ENCODE measurements at regions of chrX and their contacts with region 1.

Region 1: DNA sequence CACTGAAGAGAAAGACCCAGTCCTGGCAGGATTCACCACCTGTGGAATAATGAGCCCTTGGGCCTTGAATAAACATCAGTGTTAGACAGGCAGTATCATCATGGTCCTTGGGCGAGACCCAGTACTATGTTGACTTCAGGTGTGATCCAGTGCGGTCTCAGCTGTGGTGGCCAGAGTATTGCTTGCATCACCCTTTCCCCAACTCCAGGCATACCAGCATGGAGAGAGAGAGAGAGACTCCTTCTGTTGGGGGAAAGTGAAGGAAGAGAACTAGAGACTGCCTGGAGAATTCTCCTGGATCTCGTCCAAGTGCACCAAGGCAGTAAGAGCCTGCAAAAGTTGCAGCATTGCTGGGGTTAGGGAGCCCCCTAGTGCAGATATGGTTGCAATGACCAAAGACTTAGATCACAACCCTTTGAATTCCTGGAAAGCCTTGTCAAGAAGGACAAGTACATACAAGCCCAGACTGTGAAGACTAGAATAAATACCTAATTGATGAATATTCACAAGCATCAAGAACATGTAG is 61.1 kb upstream of the VAMP7 start:
- DNase-seq: peak; percentile 22 to 61
- ATAC-seq: peak; percentile 83 to 90 (median 88)
- H3K4me3 ChIP-seq: no peak overlapping the region
- H3K27ac ChIP-seq: no peak overlapping the region
- H3K4me1 ChIP-seq: no peaks in the 10 kb centered on the region
- H3K27me3 ChIP-seq: no peaks in the 10 kb centered on the region
- CTCF ChIP-seq: peak; percentile 62

Region 2: DNA sequence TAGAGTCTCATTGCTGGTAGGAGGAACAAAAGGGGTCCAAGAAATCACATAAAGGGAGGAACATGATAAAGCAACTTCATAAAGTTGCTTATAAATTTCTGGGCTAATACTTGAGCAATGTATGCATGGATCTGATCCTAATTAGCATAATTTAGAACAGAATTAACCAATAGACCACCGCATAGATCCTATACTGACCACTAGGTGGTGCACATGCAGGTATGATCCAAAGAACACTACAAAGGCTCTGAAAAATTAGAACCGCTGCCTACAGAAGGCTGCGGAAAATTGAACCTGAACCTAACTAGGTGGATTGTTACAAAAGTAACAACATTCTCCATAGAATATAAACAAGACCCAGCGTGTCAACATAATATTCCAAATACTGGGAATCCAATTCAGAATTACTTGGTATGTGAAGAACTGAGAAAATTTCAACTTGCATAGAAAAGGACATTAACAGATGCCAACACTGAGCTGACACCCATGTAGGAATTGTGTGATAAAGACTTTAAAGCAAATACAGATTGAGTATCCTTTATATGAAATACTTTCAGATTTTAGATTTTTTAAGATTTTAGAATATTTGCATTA is 725.5 kb before region 1 on chrX:
- intact Hi-C with region 1: loop called in 1 of 2 experiments (anchors 5 kb)
- DNase-seq: no peak
- ATAC-seq: no peak
- H3K4me3 ChIP-seq: no peak overlapping the region
- H3K27ac ChIP-seq: no peak overlapping the region
- H3K4me1 ChIP-seq: no peaks in the 10 kb centered on the region
- H3K27me3 ChIP-seq: no peaks in the 10 kb centered on the region
- CTCF ChIP-seq: peak; percentile 63

Region 3: DNA sequence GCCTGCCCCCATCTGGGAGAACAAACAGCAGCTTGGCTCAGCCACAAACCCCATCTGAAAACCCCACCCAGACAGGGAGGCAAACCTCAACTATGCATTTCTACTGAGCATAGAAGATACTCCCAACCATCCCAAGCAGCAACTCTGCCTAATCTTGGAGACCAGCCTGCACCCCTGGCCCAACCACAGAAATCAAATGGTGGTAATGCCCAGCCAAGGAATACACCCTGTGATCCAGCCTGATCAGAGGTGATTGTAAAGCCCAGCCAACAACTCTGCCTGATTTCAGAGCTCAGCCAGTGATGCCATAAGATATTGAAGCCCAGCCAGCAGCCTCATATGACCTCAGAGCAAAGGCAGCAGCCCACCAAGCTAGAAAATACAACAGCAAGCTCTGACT is 227.0 kb before region 1 on chrX:
- intact Hi-C with region 1: no loop called
- DNase-seq: no peak
- ATAC-seq: no peak
- H3K4me3 ChIP-seq: no peak overlapping the region
- H3K27ac ChIP-seq: no peak overlapping the region
- H3K4me1 ChIP-seq: no peaks in the 10 kb centered on the region
- H3K27me3 ChIP-seq: no peaks in the 10 kb centered on the region
- CTCF ChIP-seq: no peak

Region 4: DNA sequence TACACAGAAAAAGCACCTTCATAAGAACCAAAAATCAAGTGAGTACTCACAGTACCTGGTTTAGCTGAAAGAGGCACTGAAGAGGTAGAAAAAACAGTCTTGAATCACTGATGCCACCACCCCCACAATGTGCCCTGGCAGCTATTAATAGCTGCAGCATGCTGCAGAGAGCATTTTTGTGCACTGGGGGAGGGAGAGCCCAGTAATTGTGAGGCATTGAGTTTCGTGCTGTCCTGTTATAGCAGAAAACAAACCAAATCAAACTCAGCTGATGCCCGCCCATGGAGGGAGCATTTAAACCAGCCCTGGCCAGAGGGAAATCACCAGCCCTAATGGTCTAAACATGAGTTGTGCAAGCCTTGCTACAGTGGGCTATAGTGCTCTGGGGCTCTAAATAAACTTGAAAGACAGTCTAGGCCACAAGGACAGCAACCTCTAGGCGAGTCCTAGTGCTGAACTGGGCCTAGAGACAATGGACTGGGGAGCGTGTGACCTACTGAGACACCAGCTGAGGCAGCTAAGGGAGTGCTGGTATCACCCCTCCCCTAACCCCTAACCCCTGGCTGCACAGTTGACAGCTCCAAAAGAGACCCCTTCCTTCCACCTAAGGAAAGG is 101.0 kb before region 1 on chrX:
- intact Hi-C with region 1: no loop called
- DNase-seq: no peak
- ATAC-seq: peak; percentile 87 to 99 (median 93)
- H3K4me3 ChIP-seq: peak overlapping the region; percentile 51
- H3K27ac ChIP-seq: peak overlapping the region; percentile 64
- H3K4me1 ChIP-seq: no peaks in the 10 kb centered on the region
- H3K27me3 ChIP-seq: no peaks in the 10 kb centered on the region
- CTCF ChIP-seq: no peak

Region 5: GRCh38 chrX:155757046-155757759 is 62.8 kb before region 1 on chrX:
- intact Hi-C with region 1: no loop called
- DNase-seq: no peak
- ATAC-seq: no peak
- H3K4me3 ChIP-seq: no peak overlapping the region
- H3K27ac ChIP-seq: no peak overlapping the region
- H3K4me1 ChIP-seq: peaks cover 7% of the 10 kb centered on the region
- H3K27me3 ChIP-seq: no peaks in the 10 kb centered on the region
- CTCF ChIP-seq: no peak